PC-9 (cell line): ENCODE measurements at regions of chr9 and their contacts with region 1.

Region 1: GRCh38 chr9:86282077-86282978 is at the start of gene ISCA1:
- DNase-seq: peak; percentile 78 to 95
- H3K4me3 ChIP-seq: peak within 1 kb of the TSS; percentile 98
- H3K27ac ChIP-seq: peak within 1 kb of the TSS; percentile 85
- H3K4me1 ChIP-seq: peaks cover 18% of the 10 kb centered on the region
- H3K27me3 ChIP-seq: no peaks in the 10 kb centered on the region
- CTCF ChIP-seq: no peak
- total RNA-seq, gene ISCA1: 21.5 and 29.6 TPM in 2 replicates

Region 2: GRCh38 chr9:85940832-85941621 is 341.3 kb before region 1 on chr9 and contains the start of gene NAA35:
- CTCF ChIA-PET with region 1: no interaction called
- POLR2A ChIA-PET with region 1: no interaction called
- intact Hi-C with region 1: loop called (anchors 2 kb)
- DNase-seq: peak; percentile 91 to 100
- H3K4me3 ChIP-seq: peak within 1 kb of the TSS; percentile 99
- H3K27ac ChIP-seq: peak within 1 kb of the TSS; percentile 77
- H3K4me1 ChIP-seq: peaks cover 12% of the 10 kb centered on the region
- H3K27me3 ChIP-seq: no peaks in the 10 kb centered on the region
- CTCF ChIP-seq: no peak
- total RNA-seq, gene NAA35: 33.3 and 33.6 TPM in 2 replicates

Region 3: GRCh38 chr9:86072394-86072877 is 209.9 kb before region 1 on chr9:
- CTCF ChIA-PET with region 1: interaction called, 14 read pairs
- POLR2A ChIA-PET with region 1: no interaction called
- intact Hi-C with region 1: no loop called
- DNase-seq: no peak
- H3K4me3 ChIP-seq: no peak overlapping the region
- H3K27ac ChIP-seq: no peak overlapping the region
- H3K4me1 ChIP-seq: no peaks in the 10 kb centered on the region
- H3K27me3 ChIP-seq: no peaks in the 10 kb centered on the region
- CTCF ChIP-seq: no peak

Region 4: DNA sequence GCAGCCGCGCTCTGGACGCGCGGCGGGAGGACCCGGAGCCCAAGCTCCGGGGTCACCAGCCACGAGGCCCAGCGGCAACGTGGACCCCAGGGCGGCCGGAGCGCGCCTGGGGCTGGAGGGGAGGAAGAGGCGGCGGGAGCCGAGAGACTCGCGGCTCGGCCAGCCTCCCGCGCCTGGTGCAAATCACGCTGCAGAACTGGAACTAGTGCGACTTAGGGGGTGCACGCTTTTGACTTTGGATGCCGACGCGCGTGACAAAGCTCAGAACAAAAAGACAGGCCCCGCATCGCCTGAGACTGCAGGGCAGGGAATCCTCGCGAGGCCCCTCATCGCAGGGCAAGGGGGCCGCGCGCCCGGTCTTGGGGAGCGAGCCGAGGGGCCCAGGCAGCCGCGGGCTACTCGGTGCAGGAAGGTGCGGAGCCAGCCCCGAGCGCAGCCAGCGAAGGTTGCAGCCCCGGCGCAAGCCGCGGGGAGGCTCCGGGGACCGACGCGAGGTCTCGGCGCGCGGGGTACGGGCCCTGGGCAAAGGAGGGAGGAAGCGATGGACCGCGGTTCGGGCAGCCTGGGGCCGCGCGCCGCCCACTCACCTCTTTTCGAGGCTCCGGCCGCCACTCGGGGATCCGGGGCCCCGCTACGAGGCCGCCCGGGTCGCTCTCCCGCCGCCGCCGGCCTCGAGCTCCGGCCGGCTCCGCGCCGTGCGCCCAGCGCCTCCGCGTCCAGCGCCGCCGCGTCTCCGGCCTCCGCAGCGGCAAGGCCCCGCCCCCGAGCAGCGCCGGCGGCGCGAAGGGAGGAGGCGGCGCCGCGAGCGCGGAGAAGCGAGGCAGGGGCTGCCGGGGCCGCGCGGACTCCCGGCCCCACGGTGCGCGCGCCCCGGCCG is 183.3 kb before region 1 on chr9 and contains the start of gene GOLM1:
- CTCF ChIA-PET with region 1: no interaction called
- POLR2A ChIA-PET with region 1: interaction called, 15 read pairs
- intact Hi-C with region 1: no loop called
- DNase-seq: peak in 1 of 2 experiments; percentile 77
- H3K4me3 ChIP-seq: peak within 1 kb of the TSS; percentile 85
- H3K27ac ChIP-seq: peak within 1 kb of the TSS; percentile 22; the same call in 1 of the 2 replicates
- H3K4me1 ChIP-seq: peaks cover 44% of the 10 kb centered on the region
- H3K27me3 ChIP-seq: no peaks in the 10 kb centered on the region
- CTCF ChIP-seq: 0 out of 2 replicates have a peak, but pooled peaks have one; percentile 18
- total RNA-seq, gene GOLM1: 92.5 and 94.7 TPM in 2 replicates

Region 5: DNA sequence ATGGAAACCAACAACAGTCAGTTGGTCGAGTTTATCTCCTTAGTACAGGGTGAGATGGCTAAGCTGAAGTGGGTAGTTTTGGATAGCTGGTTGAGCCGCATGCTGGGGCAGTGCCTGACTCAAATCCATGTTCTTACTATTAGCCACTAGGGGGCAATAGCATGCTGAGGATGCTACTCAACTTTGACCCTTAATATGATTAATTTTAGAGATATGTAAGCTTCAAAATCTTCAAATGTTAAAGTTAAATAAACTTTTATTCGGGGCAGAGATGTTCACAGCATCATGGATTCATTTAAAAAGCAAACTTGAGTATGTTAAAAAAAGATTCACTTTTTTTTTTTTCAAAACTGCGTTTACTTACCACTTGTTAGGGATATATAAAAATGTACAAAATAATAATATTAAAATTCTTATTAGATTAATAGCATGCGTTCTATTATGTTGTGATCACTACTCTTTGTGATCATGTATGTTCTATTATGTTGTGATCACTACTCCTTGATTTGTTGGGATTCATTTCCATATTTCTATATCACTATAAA is 79.9 kb before region 1 on chr9:
- CTCF ChIA-PET with region 1: no interaction called
- POLR2A ChIA-PET with region 1: interaction called, 11 read pairs
- intact Hi-C with region 1: no loop called
- DNase-seq: peak; percentile 18 to 52
- H3K4me3 ChIP-seq: no peak overlapping the region
- H3K27ac ChIP-seq: no peak overlapping the region
- H3K4me1 ChIP-seq: no peaks in the 10 kb centered on the region
- H3K27me3 ChIP-seq: no peaks in the 10 kb centered on the region
- CTCF ChIP-seq: peak; percentile 86

Region 6: DNA sequence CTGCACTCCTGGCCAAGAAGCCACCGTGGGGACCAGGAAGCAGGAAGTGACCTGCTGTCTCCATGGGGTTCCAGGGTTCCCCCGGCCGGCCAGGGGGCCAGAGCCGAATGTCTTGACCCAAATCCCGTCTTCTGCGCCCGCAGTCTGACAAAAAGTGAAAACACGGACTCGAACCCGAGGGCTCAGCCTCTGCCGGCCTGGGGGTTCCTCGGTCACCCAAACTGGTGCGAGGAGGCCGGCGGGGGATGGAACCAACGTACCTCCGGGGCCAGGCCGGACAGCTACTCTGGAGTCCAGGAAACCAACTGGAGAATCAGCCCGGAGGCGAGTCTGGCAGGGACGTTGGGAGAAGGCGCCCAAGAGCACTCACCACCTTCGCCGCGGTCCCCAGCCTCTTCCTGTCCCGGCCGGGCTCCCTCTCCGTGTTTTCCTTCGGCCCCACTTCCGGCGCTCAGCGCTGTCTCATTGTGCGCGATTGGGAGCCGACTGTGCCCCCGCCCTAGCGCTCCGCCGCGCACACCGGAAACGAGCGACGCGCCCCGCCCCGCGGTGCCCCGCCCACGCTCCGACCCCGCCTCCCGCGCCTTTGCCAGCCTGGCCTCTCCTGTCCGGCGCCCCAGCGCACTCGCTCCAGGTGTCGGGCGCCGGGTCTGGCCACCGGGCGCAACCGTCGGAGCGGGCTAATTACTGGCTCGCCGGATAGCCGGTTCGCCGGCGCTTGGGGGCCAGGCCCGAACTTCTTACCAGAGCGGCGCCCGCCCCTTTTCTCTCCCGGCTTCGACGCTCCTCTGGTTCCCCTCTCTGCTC is 71.9 kb after region 1 on chr9 and contains the start of gene TUT7:
- CTCF ChIA-PET with region 1: no interaction called
- POLR2A ChIA-PET with region 1: no interaction called
- intact Hi-C with region 1: loop called (anchors 1 kb)
- DNase-seq: peak; percentile 85 to 99
- H3K4me3 ChIP-seq: peak within 1 kb of the TSS; percentile 64
- H3K27ac ChIP-seq: peak within 1 kb of the TSS; percentile 86
- H3K4me1 ChIP-seq: peaks cover 55% of the 10 kb centered on the region
- H3K27me3 ChIP-seq: no peaks in the 10 kb centered on the region
- CTCF ChIP-seq: no peak
- total RNA-seq, gene TUT7: 30.1 and 36.1 TPM in 2 replicates